Dendritic cell treated with granulocyte-macrophage colony-stimulating factor and Interleukin-4, amounts not matched to agents 40 ng/mL and 50 ng/mL, for 4 days (primary cell): ENCODE measurements at regions of chr11 and their contacts with region 1.

Region 1: DNA sequence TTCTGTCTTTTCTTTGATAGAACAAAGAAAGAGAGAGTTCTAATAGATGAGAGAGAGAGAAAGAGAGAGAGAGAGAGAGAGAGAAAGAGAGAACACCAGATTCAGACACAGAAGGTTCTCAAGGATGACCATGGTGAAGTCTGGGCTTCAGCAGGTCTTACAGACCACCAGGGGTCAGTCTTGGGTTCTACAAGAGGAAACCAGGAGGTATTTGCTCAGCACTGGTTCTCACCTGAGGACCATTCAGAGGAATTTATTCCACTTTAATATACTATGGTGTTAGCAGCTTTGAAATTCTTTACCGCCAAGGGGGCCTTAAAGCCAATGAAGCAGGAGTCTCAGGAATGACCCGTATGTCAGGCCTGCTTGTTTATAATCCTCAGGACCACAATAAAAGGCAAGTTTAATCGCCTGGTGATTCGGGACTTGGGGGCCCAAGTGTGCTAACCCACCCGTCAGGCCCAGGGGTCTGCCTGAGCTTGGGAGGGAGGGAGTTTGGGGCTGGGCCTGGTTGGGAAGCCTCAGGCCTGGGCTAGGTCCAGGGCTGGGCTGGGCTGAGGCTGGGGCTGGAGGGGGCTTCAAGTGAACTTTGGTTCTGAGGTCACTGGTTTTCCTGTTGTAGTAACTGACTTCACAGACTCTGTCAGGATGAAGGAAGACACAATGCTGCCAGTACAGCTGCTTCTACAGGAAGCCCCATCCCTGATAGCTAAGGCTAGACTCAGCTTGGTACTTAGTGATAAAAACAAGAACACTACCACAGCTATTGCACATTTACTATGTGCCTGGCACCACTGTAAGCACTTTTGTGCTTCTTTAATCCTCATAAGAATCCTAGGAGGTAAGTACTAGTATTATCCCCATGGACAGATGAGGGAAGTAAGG is 179.2 kb upstream of the ZBED5 start:
- H3K4me3 Mint-ChIP-seq: no peak overlapping the region
- H3K27ac Mint-ChIP-seq: peak overlapping the region; percentile 22
- H3K4me1 Mint-ChIP-seq: peaks cover 23% of the 10 kb centered on the region
- H3K27me3 Mint-ChIP-seq: peaks cover 29% of the 10 kb centered on the region

Region 2: DNA sequence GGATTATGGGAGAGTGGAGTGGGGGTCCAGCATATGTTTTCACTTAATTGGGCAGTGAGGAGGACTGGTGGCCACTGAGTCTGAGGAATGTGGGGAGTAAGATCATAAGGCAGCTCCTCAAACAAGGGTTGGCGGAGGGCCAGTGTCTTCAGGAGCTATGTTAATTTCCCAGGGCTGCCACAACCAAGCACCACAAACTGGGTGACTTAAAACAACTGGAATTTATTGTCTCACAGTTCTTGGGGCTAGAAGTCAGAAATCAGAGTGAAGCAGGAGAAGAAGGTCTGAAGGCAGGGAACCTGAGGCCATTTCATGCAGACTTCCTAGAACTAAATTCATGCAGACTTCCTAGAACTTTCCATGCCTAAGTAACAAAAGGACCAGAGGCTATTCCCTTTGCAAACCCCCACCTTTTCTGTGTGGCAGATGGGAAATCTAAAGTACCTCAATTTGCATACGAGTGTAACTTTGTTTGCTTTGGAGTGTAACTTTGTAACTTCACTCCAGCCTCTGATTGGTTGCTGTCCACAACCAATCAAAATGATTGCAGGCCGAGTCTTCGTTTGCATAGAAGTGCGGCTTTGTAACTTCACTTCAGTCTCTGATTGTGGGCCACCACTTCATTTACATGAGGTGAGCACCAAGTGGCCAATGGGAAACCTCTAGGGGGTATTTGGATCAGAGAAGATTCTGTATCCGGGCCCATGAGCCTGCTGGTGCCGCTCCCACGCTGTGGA is 128.7 kb before region 1 on chr11:
- intact Hi-C with region 1: no loop called
- H3K4me3 Mint-ChIP-seq: no peak overlapping the region
- H3K27ac Mint-ChIP-seq: no peak overlapping the region
- H3K4me1 Mint-ChIP-seq: peaks cover 30% of the 10 kb centered on the region
- H3K27me3 Mint-ChIP-seq: no peaks in the 10 kb centered on the region

Region 3: DNA sequence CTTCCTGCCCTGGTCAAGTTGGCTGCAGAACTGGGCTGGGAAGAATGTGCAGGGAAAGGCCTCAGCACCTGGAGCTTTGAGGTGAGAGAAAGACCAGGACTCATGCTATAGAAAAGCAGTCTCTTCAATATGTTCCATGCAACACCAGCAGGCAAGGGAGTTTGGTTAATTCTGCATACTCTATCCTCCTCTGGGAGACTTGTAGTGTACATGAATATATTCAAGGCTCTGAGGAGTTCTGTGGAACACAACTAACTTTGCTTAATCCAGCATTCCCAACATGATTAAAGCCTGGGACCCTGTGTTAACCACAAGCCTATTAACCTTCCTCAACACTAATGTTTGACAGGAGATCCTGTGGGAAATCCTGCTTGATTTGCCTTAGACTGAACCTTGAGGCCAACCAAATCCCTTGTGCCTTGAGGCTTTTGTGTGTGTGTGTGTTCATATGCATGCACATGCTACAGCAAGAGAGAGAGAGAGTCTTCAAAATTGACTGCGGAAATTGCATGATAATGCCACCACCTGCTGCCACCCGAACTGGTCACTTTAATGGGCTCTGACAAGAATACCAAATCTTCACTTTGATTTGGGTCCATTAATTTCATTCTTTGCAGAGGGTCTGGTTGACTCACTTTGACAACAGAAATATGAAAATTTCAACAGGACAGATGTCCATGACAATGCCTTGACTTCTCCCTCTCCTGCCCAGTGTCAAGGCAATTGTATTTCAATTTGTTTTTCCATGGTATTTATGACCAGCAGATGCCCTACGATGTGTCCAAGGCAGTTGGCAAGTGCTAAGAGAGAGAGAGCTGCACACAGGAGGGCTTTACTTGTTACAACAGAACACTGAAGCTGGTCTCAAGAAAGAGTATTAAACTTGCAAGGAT is 59.0 kb after region 1 on chr11:
- intact Hi-C with region 1: no loop called
- H3K4me3 Mint-ChIP-seq: no peak overlapping the region
- H3K27ac Mint-ChIP-seq: no peak overlapping the region
- H3K4me1 Mint-ChIP-seq: no peaks in the 10 kb centered on the region
- H3K27me3 Mint-ChIP-seq: peaks cover 45% of the 10 kb centered on the region

Region 4: GRCh38 chr11:11265994-11266606 is 229.0 kb after region 1 on chr11:
- intact Hi-C with region 1: loop called (anchors 10 kb)
- H3K4me3 Mint-ChIP-seq: no peak overlapping the region
- H3K27ac Mint-ChIP-seq: peak overlapping the region; percentile 49
- H3K4me1 Mint-ChIP-seq: peaks cover 52% of the 10 kb centered on the region
- H3K27me3 Mint-ChIP-seq: peaks cover 39% of the 10 kb centered on the region

Region 5: DNA sequence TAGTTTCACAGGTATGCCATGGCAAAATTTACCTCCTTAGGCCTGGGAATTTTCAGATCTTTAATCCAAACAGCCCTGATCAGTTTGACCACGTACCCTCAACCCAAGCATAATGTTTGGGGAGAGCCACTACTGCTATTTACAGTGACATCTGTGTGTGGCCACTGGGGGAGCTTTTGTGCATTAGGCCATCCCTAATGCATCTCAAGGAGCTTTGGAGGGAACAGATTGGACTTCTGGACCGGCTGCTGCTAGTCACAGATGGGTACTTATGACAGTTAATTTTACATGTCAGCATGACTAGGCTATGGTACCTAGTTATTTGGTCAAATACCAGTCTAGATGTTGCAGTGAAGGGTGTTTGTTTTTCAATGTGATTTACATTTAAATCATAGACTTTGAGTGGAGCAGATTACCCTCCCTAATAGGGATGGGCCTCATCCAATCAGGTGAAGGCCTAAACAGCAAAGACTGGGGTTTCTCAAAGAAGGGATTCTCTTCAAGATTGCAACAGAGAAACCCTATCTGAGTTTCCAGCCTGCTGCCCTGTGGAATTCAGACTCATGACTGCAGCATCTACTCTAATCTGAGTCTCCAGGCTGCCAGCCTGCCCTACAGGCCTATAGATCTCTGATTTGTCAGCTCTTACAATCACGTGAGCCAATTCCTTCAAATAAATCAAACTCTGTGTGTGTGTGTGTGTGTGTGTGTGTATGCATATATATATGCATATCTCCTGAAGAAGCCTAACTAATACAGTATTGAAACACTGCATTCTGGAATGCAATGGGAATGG is 622.7 kb after region 1 on chr11:
- intact Hi-C with region 1: loop called (anchors 10 kb)
- H3K4me3 Mint-ChIP-seq: no peak overlapping the region
- H3K27ac Mint-ChIP-seq: peak overlapping the region; percentile 37
- H3K4me1 Mint-ChIP-seq: peaks cover 5% of the 10 kb centered on the region
- H3K27me3 Mint-ChIP-seq: peaks cover 55% of the 10 kb centered on the region